Activated CD8-positive, alpha-beta T cell treated with anti-CD3 and anti-CD28 coated beads for 36 hours (primary cell): ENCODE measurements at regions of chr1 and their contacts with region 1.

Region 1: DNA sequence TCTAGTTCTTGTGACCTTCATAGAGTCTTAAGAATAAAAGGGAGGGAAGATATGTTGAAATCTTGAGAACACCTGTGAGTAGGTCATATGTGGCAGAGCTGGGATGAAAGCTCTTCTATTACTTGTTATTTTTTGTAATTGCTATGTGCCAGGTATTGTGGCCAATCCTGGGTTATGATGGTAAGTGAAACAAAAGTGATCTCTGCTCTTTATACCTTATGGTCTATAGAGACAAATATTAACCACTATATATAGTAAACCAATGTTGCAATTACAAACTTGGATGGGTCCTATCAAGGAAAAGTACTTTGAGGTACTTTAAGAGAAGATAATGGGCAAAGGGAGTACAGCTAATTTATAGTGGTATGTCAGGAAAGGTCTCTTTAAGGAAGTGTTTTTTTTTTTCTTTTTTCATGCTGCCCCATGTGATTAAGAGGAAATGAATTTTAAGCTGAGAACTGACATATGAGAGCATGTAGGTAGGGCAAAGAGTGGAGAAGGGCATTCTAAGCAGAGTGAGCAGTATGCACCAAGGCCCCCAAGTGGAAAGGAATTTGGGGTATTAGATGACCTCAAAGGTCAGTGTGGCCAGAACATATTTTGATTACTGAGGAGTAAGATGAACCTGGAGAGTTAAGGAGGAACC is 43.3 kb downstream of the POU2F1 start:
- DNase-seq: no peak
- ATAC-seq: peak; percentile 67
- H3K4me3 Mint-ChIP-seq: no peak overlapping the region
- H3K27ac Mint-ChIP-seq: no peak overlapping the region
- H3K4me1 Mint-ChIP-seq: peaks cover 22% of the 10 kb centered on the region
- H3K27me3 Mint-ChIP-seq: no peaks in the 10 kb centered on the region
- CTCF ChIP-seq: no peak

Region 2: GRCh38 chr1:167220537-167221125 is 43.3 kb before region 1 on chr1 and contains the start of gene POU2F1:
- CTCF ChIA-PET with region 1: interaction called, 17 read pairs
- POLR2A ChIA-PET with region 1: interaction called, 6 read pairs
- intact Hi-C with region 1: no loop called
- DNase-seq: peak; percentile 99
- ATAC-seq: peak; percentile 81
- H3K4me3 Mint-ChIP-seq: peak within 1 kb of the TSS; percentile 92
- H3K27ac Mint-ChIP-seq: peak within 1 kb of the TSS; percentile 99
- H3K4me1 Mint-ChIP-seq: peaks cover 43% of the 10 kb centered on the region
- H3K27me3 Mint-ChIP-seq: no peaks in the 10 kb centered on the region
- CTCF ChIP-seq: peak; percentile 11
- total RNA-seq, gene POU2F1: 23.6 to 24.2 TPM

Region 3: DNA sequence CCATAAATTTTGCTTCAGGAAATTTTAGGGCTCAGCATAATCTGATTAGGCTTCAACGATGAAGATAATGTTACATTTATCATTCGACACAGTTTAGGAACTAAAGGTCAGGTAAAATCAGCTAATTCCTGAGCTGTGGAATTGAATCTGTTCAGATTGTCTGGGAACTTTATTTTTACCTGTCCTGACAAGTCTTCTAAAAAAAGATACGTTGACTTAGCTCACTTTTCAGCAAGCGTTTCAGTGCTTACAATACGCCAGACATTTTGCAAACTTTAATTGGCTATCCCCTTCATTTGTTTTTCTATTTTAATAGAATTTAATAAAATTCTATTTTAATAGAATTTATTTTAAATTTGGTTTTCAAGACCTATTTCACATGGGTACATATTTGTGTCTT is 14.6 kb after region 1 on chr1:
- CTCF ChIA-PET with region 1: interaction called, 24 read pairs
- POLR2A ChIA-PET with region 1: interaction called, 3 read pairs
- intact Hi-C with region 1: no loop called
- DNase-seq: no peak
- ATAC-seq: no peak
- H3K4me3 Mint-ChIP-seq: no peak overlapping the region
- H3K27ac Mint-ChIP-seq: no peak overlapping the region
- H3K4me1 Mint-ChIP-seq: peaks cover 43% of the 10 kb centered on the region
- H3K27me3 Mint-ChIP-seq: no peaks in the 10 kb centered on the region
- CTCF ChIP-seq: no peak

Region 4: GRCh38 chr1:167442124-167442848 is 178.3 kb after region 1 on chr1:
- CTCF ChIA-PET with region 1: interaction called, 11 read pairs
- POLR2A ChIA-PET with region 1: no interaction called
- intact Hi-C with region 1: no loop called
- DNase-seq: peak; percentile 93
- ATAC-seq: peak; percentile 73
- H3K4me3 Mint-ChIP-seq: no peak overlapping the region
- H3K27ac Mint-ChIP-seq: peak overlapping the region; percentile 68
- H3K4me1 Mint-ChIP-seq: peaks cover 88% of the 10 kb centered on the region
- H3K27me3 Mint-ChIP-seq: no peaks in the 10 kb centered on the region
- CTCF ChIP-seq: peak; percentile 88

Region 5: GRCh38 chr1:167553136-167554027 is 289.4 kb after region 1 on chr1 and contains the start of gene CREG1:
- CTCF ChIA-PET with region 1: interaction called, 13 read pairs
- POLR2A ChIA-PET with region 1: no interaction called
- intact Hi-C with region 1: no loop called
- DNase-seq: peak; percentile 92
- ATAC-seq: peak; percentile 100
- H3K4me3 Mint-ChIP-seq: peak within 1 kb of the TSS; percentile 86
- H3K27ac Mint-ChIP-seq: peak within 1 kb of the TSS; percentile 23
- H3K4me1 Mint-ChIP-seq: peaks cover 32% of the 10 kb centered on the region
- H3K27me3 Mint-ChIP-seq: no peaks in the 10 kb centered on the region
- CTCF ChIP-seq: no peak
- total RNA-seq, gene CREG1: 9.7 to 10.0 TPM